Naive thymus-derived CD4-positive, alpha-beta T cell (primary cell): ENCODE measurements at regions of chr7 and their contacts with region 1.

Region 1: DNA sequence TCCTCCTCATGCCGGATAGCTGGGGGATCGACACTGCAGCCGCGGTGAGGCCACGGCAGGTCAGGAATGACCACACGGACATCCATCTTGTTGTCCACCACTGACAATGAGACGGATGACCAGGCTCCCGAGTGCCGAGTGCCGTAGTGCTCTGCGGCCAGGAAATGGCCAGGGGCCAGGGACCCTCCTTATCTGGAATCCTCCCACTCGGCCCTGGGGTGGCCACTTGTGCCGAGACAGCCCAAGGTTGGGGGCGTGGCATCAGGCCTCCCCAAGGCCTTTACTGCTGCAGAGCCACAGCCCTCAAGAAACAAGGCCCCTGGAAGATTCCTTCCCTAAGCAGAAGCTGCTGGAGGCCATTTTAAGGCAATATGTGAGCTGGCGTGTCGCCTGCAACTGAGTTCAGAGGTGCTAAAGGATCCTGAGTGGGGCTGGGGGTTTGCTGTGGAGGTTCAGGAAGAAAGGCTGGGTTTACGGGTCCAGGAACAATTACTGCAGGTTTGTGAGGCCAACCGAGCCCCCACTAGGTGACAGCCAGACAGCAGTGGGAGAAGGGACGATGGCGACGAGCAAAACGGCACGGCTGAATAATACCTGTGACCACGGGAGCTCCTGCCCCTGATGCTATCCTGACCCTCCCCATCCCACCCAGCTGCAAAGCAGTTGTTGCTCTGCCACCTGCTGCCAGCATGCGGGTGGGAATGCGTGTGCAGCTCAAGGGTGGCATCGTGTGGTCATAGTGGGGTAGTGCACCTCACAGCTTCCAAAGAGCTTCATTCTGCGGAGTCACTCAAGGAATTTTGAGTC is 31.6 kb upstream of the LEP start:
- DNase-seq: peak; percentile 44 to 73 (median 64)
- ATAC-seq: peak; percentile 94
- H3K4me3 ChIP-seq: no peak overlapping the region
- H3K4me3 Mint-ChIP-seq: no peak overlapping the region
- H3K27ac ChIP-seq: no peak overlapping the region
- H3K27ac Mint-ChIP-seq: no peak overlapping the region
- H3K4me1 ChIP-seq: no peaks in the 10 kb centered on the region
- H3K4me1 Mint-ChIP-seq: peaks cover 0 to 2% (median 0%) of the 10 kb centered on the region in 7 donors
- H3K27me3 ChIP-seq: no peaks in the 10 kb centered on the region
- H3K27me3 Mint-ChIP-seq: peaks cover 0 to 24% (median 19%) of the 10 kb centered on the region in 5 donors

Region 2: GRCh38 chr7:127514499-127514898 is 694.9 kb before region 1 on chr7:
- CTCF ChIA-PET with region 1: interaction called, 3 read pairs
- POLR2A ChIA-PET with region 1: no interaction called
- intact Hi-C with region 1: loop called (anchors 1 to 10 kb)
- DNase-seq: peak in 7 of 9 donors; percentile 14 to 59 (median 41)
- ATAC-seq: peak; percentile 75
- H3K4me3 ChIP-seq: no peak overlapping the region
- H3K4me3 Mint-ChIP-seq: no peak overlapping the region
- H3K27ac ChIP-seq: no peak overlapping the region
- H3K27ac Mint-ChIP-seq: no peak overlapping the region
- H3K4me1 ChIP-seq: no peaks in the 10 kb centered on the region
- H3K4me1 Mint-ChIP-seq: no peaks in the 10 kb centered on the region
- H3K27me3 ChIP-seq: peaks cover 0 to 3% of the 10 kb centered on the region in 2 donors
- H3K27me3 Mint-ChIP-seq: peaks cover 13 to 43% (median 29%) of the 10 kb centered on the region in 5 donors

Region 3: GRCh38 chr7:127629268-127629854 is 580.1 kb before region 1 on chr7:
- CTCF ChIA-PET with region 1: no interaction called
- POLR2A ChIA-PET with region 1: no interaction called
- intact Hi-C with region 1: loop called in 1 of 2 experiments (anchors 2 kb)
- DNase-seq: peak in 6 of 9 donors; percentile 5 to 25 (median 18)
- ATAC-seq: peak; percentile 63
- H3K4me3 ChIP-seq: no peak overlapping the region
- H3K4me3 Mint-ChIP-seq: no peak overlapping the region
- H3K27ac ChIP-seq: no peak overlapping the region
- H3K27ac Mint-ChIP-seq: peak overlapping the region in 2 of 9 donors; percentile 31 to 87
- H3K4me1 ChIP-seq: no peaks in the 10 kb centered on the region
- H3K4me1 Mint-ChIP-seq: peaks cover 0 to 3% (median 0%) of the 10 kb centered on the region in 7 donors
- H3K27me3 ChIP-seq: no peaks in the 10 kb centered on the region
- H3K27me3 Mint-ChIP-seq: peaks cover 7 to 31% (median 14%) of the 10 kb centered on the region in 5 donors

Region 4: GRCh38 chr7:127717502-127718339 is 491.7 kb before region 1 on chr7:
- CTCF ChIA-PET with region 1: interaction called, 11 read pairs
- POLR2A ChIA-PET with region 1: no interaction called
- intact Hi-C with region 1: no loop called
- DNase-seq: no peak
- ATAC-seq: no peak
- H3K4me3 ChIP-seq: no peak overlapping the region
- H3K4me3 Mint-ChIP-seq: peak overlapping the region in 1 of 10 donors; percentile 10
- H3K27ac ChIP-seq: no peak overlapping the region
- H3K27ac Mint-ChIP-seq: peak overlapping the region in 2 of 9 donors; percentile 11 to 36
- H3K4me1 ChIP-seq: no peaks in the 10 kb centered on the region
- H3K4me1 Mint-ChIP-seq: peaks cover 6 to 28% (median 19%) of the 10 kb centered on the region in 7 donors
- H3K27me3 ChIP-seq: no peaks in the 10 kb centered on the region
- H3K27me3 Mint-ChIP-seq: no peaks in the 10 kb centered on the region